PC-9 (cell line): ENCODE measurements at regions of chr2 and their contacts with region 1.

Region 1: GRCh38 chr2:31894656-31895055 is 116.2 kb downstream of the MEMO1 start:
- DNase-seq: no peak
- H3K4me3 ChIP-seq: no peak overlapping the region
- H3K27ac ChIP-seq: no peak overlapping the region
- H3K4me1 ChIP-seq: no peaks in the 10 kb centered on the region
- H3K27me3 ChIP-seq: no peaks in the 10 kb centered on the region
- CTCF ChIP-seq: no peak

Region 2: DNA sequence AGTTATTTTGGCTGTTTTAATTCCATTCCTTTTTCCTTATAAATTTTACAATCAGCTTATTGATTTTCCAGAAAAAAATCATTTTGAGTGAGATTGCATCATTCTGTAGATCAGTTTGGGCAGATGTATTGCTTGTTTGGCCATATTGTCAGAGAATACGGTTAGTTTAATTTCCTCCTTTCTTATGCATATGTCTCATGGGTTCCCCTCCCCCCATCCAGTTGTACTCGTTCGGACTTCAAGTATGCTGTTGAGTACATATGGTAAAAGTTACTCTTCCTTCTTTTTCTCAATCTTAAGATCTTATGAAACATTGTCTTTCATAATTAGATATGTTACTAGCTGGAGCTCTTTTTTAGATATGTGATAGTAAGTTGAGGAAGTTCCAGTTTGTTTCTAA is 602.0 kb after region 1 on chr2:
- CTCF ChIA-PET with region 1: no interaction called
- POLR2A ChIA-PET with region 1: interaction called, 10 read pairs
- intact Hi-C with region 1: no loop called
- DNase-seq: no peak
- H3K4me3 ChIP-seq: no peak overlapping the region
- H3K27ac ChIP-seq: no peak overlapping the region
- H3K4me1 ChIP-seq: no peaks in the 10 kb centered on the region
- H3K27me3 ChIP-seq: no peaks in the 10 kb centered on the region
- CTCF ChIP-seq: no peak